ENCODE measurements at regions of chr2 and their contacts with region 1.

Region 1: DNA sequence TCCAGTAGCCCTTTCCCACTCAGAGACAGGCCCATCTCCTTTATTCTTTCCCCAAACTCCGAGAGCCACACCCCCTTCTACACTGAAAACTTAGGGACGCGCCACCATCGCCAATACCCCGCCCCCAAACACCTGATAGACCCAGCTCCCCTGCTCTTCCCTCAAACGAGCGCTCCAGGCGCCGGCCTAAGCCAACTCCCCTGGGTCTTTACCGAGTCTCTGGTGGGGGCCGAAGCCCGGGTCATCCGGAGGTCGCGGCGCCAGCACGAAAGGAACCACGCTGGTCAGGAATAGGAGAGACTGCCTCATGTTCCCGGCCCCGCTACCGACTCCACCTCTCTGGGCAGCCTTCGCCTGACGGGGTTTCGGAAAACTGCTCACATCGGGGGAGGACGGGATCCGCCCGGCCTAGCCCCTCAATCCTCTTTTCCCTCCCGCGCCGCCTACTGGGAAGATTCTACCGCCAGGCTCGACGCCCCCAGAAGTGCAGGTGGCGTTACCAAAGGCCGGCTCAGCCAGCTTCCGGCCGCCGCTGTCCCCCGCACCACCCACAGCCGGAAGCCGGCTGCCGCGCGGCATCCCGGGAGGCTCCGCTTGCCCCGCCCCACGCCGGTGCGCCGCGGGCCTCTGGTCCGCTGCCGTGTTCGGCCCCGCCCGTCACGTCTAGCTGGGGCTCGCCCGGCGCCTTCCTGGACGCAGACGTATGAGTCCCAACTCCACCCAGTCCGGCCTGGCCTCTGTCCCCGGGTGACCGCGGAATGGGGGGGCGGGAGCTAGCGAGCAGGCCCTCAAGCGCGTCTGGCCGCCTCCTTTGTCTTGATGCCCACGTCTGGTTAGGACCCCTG is at the start of gene ADAM17:
- DNase-seq: peak; percentile 80 to 88 (median 83)
- H3K4me3 ChIP-seq: peak within 1 kb of the TSS; percentile 97
- H3K4me3 Mint-ChIP-seq: peak within 1 kb of the TSS; percentile 93 to 98 (median 96)
- H3K27ac ChIP-seq: peak within 1 kb of the TSS; percentile 95
- H3K27ac Mint-ChIP-seq: peak within 1 kb of the TSS; percentile 82 to 99 (median 98)
- H3K4me1 ChIP-seq: peaks cover 43% of the 10 kb centered on the region
- H3K4me1 Mint-ChIP-seq: peaks cover 49 to 64% (median 64%) of the 10 kb centered on the region in 3 donors
- H3K27me3 ChIP-seq: no peaks in the 10 kb centered on the region
- H3K27me3 Mint-ChIP-seq: no peaks in the 10 kb centered on the region
- total RNA-seq, gene ADAM17: 17.9 to 20.9 TPM

Region 2: DNA sequence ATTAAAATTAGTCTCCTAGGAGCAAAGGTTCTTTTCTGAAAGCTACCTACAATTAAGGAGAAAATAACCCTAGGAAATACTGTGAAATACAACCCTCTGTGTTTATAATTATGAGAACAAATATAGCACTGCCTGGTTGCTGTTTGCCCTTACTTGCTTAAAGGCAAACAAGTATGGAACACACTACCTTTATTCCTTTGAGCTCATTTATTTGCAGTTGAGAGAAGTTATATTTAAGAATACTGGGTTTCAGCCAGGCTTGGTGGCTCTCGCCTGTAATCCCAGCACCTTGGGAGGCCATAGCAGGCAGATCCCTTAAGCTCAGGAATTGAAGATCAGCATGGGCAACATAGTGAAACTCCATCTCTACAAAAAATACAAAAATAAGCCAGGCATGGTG is 104.3 kb before region 1 on chr2:
- CTCF ChIA-PET with region 1: no interaction called
- POLR2A ChIA-PET with region 1: no interaction called
- DNase-seq: no peak
- H3K4me3 ChIP-seq: no peak overlapping the region
- H3K4me3 Mint-ChIP-seq: no peak overlapping the region
- H3K27ac ChIP-seq: no peak overlapping the region
- H3K27ac Mint-ChIP-seq: no peak overlapping the region
- H3K4me1 ChIP-seq: no peaks in the 10 kb centered on the region
- H3K4me1 Mint-ChIP-seq: no peaks in the 10 kb centered on the region
- H3K27me3 ChIP-seq: no peaks in the 10 kb centered on the region
- H3K27me3 Mint-ChIP-seq: no peaks in the 10 kb centered on the region

Region 3: DNA sequence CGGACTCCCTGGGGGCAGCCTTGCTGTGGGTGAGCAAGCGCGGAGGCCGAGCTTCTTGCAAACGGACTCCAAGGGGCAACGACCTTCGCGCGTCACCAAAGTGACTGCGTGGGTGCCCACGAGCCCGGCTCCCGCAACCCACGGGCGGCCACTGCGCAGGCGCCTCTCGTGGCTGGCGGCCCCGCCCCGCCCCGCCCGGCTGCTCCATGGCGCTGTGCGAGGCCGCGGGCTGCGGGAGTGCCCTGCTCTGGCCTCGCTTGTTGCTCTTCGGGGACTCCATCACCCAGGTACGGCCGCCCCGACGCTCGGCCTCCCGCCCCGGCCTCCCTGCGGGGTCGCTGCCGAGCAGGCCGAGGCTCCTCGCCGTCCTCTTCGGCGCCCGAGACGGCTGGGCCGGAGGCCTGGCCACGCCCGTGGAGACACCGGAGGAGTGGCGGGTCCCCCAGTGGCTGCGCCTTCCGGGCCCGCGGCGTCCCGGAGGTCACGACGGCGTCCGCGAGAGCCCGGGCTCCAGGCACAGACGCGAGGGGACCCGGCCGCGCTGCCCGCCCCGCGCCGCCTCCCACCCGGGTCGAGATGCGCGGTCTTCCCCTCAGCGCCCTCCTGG is 81.1 kb before region 1 on chr2 and contains the start of gene IAH1:
- CTCF ChIA-PET with region 1: interaction called, 6 read pairs
- POLR2A ChIA-PET with region 1: interaction called, 10 read pairs
- DNase-seq: peak; percentile 71 to 86 (median 75)
- H3K4me3 ChIP-seq: peak within 1 kb of the TSS; percentile 42
- H3K4me3 Mint-ChIP-seq: peak within 1 kb of the TSS; percentile 83 to 93 (median 84)
- H3K27ac ChIP-seq: peak within 1 kb of the TSS; percentile 90
- H3K27ac Mint-ChIP-seq: peak within 1 kb of the TSS; percentile 89 to 98 (median 92)
- H3K4me1 ChIP-seq: peaks cover 39% of the 10 kb centered on the region
- H3K4me1 Mint-ChIP-seq: peaks cover 39 to 60% (median 53%) of the 10 kb centered on the region in 3 donors
- H3K27me3 ChIP-seq: no peaks in the 10 kb centered on the region
- H3K27me3 Mint-ChIP-seq: no peaks in the 10 kb centered on the region
- total RNA-seq, gene IAH1: 76.9 to 79.1 TPM

Region 4: DNA sequence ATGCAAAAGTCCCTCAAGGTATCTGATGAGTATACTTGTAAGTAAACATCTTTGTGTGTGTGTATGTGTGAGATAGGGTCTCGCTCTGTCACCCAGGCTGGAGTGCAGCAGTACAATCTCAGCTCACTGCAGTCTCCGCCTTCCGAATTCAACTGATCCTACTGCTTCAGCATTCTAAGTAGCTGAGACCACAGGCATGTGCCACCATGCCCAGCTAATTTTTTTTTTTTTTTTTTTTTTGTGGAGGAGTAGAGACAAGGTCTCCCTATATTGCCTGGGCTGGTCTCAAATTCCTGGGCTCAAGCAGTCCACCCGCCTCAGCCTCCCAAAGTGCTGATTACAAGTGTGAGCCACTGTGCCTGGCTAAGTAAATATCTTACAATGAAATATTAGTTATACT is 23.1 kb before region 1 on chr2:
- CTCF ChIA-PET with region 1: no interaction called
- POLR2A ChIA-PET with region 1: no interaction called
- DNase-seq: no peak
- H3K4me3 ChIP-seq: no peak overlapping the region
- H3K4me3 Mint-ChIP-seq: no peak overlapping the region
- H3K27ac ChIP-seq: no peak overlapping the region
- H3K27ac Mint-ChIP-seq: no peak overlapping the region
- H3K4me1 ChIP-seq: no peaks in the 10 kb centered on the region
- H3K4me1 Mint-ChIP-seq: peaks cover 12 to 15% (median 14%) of the 10 kb centered on the region in 3 donors
- H3K27me3 ChIP-seq: no peaks in the 10 kb centered on the region
- H3K27me3 Mint-ChIP-seq: no peaks in the 10 kb centered on the region

Region 5: DNA sequence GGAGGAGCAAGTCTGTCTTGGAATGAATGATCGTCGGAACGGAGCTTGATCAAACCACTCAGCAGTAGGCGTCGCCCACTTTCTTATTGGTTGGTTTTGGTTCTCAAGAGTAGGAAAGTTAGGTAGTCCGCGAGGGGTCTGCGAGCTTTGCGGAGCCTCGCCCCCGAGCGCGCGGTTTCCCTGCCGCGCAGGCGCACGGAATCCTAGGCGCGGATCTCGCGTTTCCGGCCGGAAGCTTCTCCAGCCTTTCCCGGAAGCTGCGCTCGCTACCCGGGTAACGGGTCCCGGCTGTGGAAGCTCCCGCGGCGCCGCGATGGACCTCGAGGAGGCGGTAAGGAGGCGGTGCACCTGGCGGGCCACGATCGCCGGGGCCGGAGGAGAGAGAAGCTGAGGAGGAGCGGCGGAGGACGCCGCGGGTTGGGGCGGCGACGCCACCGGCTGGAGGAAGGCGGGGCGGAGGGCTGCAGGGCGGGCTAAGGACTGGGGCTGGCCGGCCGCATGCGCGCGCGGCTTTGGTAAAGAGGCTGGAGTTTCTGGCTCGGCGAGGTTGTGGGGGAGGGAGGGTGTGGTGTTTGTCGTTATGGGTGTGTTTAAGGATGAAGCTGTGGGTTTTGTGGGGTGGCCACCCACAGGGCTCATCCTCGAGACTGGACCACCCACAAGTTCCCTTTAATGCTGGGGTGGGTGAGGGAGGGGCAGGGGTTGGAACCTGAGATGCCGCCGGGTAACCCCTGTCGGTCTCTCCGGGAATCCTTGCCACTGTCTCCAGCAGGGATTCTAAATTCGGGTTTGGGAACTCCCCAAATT is 287.9 kb after region 1 on chr2 and contains the start of gene TAF1B:
- CTCF ChIA-PET with region 1: interaction called, 6 read pairs
- POLR2A ChIA-PET with region 1: interaction called, 14 read pairs
- DNase-seq: peak; percentile 78 to 89 (median 85)
- H3K4me3 ChIP-seq: peak within 1 kb of the TSS; percentile 89
- H3K4me3 Mint-ChIP-seq: peak within 1 kb of the TSS; percentile 93 to 98 (median 95)
- H3K27ac ChIP-seq: peak within 1 kb of the TSS; percentile 38
- H3K27ac Mint-ChIP-seq: peak within 1 kb of the TSS; percentile 64 to 99 (median 89)
- H3K4me1 ChIP-seq: peaks cover 11% of the 10 kb centered on the region
- H3K4me1 Mint-ChIP-seq: peaks cover 45 to 54% (median 51%) of the 10 kb centered on the region in 3 donors
- H3K27me3 ChIP-seq: no peaks in the 10 kb centered on the region
- H3K27me3 Mint-ChIP-seq: peaks cover 0 to 4% of the 10 kb centered on the region in 2 donors
- total RNA-seq, gene TAF1B: 20.6 to 24.3 TPM